Esophagus muscularis mucosa (tissue), 4 donors: ENCODE measurements at regions of chr7 and their contacts with region 1.

Region 1: GRCh38 chr7:74183613-74184450 is 9.7 kb downstream of the EIF4H start:
- DNase-seq: no peak
- H3K4me3 ChIP-seq: no peak overlapping the region
- H3K27ac ChIP-seq: peak overlapping the region in 2 of 4 donors; percentile 30 to 31
- H3K4me1 ChIP-seq: peaks cover 93 to 100% (median 100%) of the 10 kb centered on the region in 4 donors
- H3K27me3 ChIP-seq: no peaks in the 10 kb centered on the region
- CTCF ChIP-seq: no peak
- EP300 ChIP-seq: no peak
- POLR2A ChIP-seq: no peak

Region 2: GRCh38 chr7:73865738-73866445 is 317.9 kb before region 1 on chr7:
- intact Hi-C with region 1: loop called (anchors 10 kb)
- DNase-seq: no peak
- H3K4me3 ChIP-seq: no peak overlapping the region
- H3K27ac ChIP-seq: no peak overlapping the region
- H3K4me1 ChIP-seq: peaks cover 17 to 30% (median 25%) of the 10 kb centered on the region in 4 donors
- H3K27me3 ChIP-seq: no peaks in the 10 kb centered on the region
- CTCF ChIP-seq: peak; percentile 64 to 79 (median 77)
- EP300 ChIP-seq: no peak
- POLR2A ChIP-seq: no peak

Region 3: DNA sequence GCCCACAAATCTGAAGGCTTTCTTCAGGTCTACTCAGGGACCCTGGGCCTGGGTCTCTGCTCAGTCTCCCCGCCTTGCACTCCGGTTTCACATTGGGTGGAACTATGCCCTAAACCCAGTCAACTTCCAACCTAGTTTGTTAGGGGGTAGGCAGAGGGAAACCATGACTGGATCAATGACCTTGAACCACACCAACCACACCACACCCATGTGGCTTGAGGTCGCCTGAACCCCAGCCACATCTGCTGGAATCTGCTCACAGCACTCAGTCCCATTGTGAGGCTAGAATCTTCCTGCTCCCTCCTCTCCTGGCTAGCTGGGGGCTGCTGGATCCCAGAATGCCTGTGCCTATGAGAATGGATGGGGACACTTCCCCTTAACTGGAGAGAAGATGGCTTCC is 52.5 kb after region 1 on chr7:
- intact Hi-C with region 1: no loop called
- DNase-seq: no peak
- H3K4me3 ChIP-seq: no peak overlapping the region
- H3K27ac ChIP-seq: no peak overlapping the region
- H3K4me1 ChIP-seq: no peaks in the 10 kb centered on the region
- H3K27me3 ChIP-seq: no peaks in the 10 kb centered on the region
- CTCF ChIP-seq: no peak
- EP300 ChIP-seq: no peak
- POLR2A ChIP-seq: no peak